CD4-positive, alpha-beta memory T cell (primary cell): ENCODE measurements at regions of chr11 and their contacts with region 1.

Region 1: DNA sequence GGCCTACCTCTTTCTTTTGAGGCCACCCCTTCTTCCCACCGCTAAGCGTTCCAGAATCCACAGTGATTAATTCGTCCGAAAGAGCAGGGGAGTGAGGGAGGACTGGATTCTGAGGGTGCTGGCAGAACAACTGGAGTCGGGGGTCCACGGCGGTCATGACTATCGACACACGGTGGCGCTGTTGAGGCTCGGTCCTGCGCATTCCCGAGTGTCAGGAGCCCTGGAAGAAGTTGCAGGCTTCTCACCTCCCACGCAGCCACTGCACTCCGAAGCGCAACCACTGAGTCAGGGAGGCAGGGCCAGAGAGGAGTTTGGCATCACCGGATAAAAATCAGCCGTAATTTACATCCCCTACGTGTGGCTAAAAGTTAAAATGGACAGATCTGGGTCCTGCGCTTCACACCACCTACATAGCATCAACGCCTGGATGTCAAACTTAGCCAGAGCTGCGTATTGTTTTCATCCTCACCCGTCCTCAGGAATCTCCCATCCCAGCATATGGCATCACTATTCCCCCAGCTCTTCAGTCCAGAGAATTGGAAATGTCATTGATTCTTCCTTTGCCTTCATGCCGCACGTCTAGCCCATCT is 10.7 kb upstream of the CTSF start:
- DNase-seq: peak; percentile 64 to 72 (median 68)
- H3K4me3 ChIP-seq: no peak overlapping the region
- H3K4me3 Mint-ChIP-seq: peak overlapping the region in 2 of 8 donors; percentile 33 to 47
- H3K27ac ChIP-seq: no peak overlapping the region
- H3K27ac Mint-ChIP-seq: peak overlapping the region in 3 of 7 donors; percentile 9 to 68 (median 25)
- H3K4me1 ChIP-seq: peaks cover 5% of the 10 kb centered on the region
- H3K4me1 Mint-ChIP-seq: peaks cover 0 to 12% (median 6%) of the 10 kb centered on the region in 4 donors
- H3K27me3 ChIP-seq: no peaks in the 10 kb centered on the region
- H3K27me3 Mint-ChIP-seq: peaks cover 0 to 7% of the 10 kb centered on the region in 2 donors

Region 2: GRCh38 chr11:66592457-66593302 is 13.6 kb after region 1 on chr11 and contains the starts of genes CCDC87 and CCS:
- CTCF ChIA-PET with region 1: interaction called, 54 read pairs
- POLR2A ChIA-PET with region 1: interaction called, 3 read pairs
- intact Hi-C with region 1: no loop called
- DNase-seq: peak; percentile 95 to 98 (median 97)
- H3K4me3 ChIP-seq: peak within 1 kb of the TSS; percentile 71 to 98
- H3K4me3 Mint-ChIP-seq: peak within 1 kb of the TSS; percentile 98 to 100 (median 99)
- H3K27ac ChIP-seq: peak within 1 kb of the TSS; percentile 88
- H3K27ac Mint-ChIP-seq: peak within 1 kb of the TSS; percentile 96 to 100 (median 100)
- H3K4me1 ChIP-seq: peaks cover 35% of the 10 kb centered on the region
- H3K4me1 Mint-ChIP-seq: peaks cover 16 to 42% (median 27%) of the 10 kb centered on the region in 4 donors
- H3K27me3 ChIP-seq: no peaks in the 10 kb centered on the region
- H3K27me3 Mint-ChIP-seq: no peaks in the 10 kb centered on the region
- total RNA-seq, gene CCDC87: not detected
- total RNA-seq, gene CCS: 61.0 to 61.5 TPM

Region 3: DNA sequence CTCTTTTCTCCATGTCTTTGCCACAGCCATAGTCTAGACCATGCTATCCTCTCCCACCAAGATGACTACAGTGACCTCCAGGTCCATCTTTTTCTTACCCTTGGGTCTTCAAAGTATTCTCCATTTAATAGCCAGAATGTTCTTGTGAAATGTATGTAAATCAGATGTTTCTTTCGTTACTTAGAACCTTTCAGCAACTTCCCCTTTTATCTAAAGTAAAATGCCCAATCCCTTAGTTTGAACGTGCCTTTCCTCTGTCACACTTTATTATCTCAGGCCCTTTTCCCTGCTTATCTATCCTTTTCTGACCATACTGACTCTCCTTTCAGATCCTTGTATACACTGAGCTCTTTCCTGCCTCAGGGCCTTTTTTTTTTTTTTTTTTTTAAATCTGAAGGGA is 80.7 kb after region 1 on chr11:
- CTCF ChIA-PET with region 1: interaction called, 10 read pairs
- POLR2A ChIA-PET with region 1: no interaction called
- intact Hi-C with region 1: no loop called
- DNase-seq: no peak
- H3K4me3 ChIP-seq: no peak overlapping the region
- H3K4me3 Mint-ChIP-seq: no peak overlapping the region
- H3K27ac ChIP-seq: no peak overlapping the region
- H3K27ac Mint-ChIP-seq: peak overlapping the region in 5 of 7 donors; percentile 3 to 74 (median 63)
- H3K4me1 ChIP-seq: no peaks in the 10 kb centered on the region
- H3K4me1 Mint-ChIP-seq: peaks cover 10 to 22% (median 12%) of the 10 kb centered on the region in 4 donors
- H3K27me3 ChIP-seq: no peaks in the 10 kb centered on the region
- H3K27me3 Mint-ChIP-seq: no peaks in the 10 kb centered on the region

Region 4: DNA sequence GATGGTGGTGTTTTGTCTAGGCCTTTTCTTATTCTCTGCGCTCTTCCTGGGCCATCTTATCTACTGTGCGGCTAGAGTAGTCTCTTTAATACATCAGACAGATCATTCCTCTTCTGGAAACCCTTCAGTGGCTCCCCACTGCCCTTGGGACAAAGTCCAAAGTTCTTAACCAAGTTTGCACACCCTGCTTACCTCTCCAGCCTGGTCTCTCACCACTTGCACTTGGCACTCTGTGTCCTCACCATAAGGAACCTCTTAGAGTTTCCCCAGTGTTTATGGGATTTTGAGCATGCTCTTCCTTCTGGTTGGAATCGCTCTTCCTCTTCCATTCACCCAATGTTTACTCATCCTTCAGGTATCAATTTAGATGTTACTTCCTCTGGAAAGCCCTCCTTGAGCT is 155.1 kb after region 1 on chr11:
- CTCF ChIA-PET with region 1: no interaction called
- POLR2A ChIA-PET with region 1: no interaction called
- intact Hi-C with region 1: no loop called
- DNase-seq: no peak
- H3K4me3 ChIP-seq: no peak overlapping the region
- H3K4me3 Mint-ChIP-seq: no peak overlapping the region
- H3K27ac ChIP-seq: no peak overlapping the region
- H3K27ac Mint-ChIP-seq: no peak overlapping the region
- H3K4me1 ChIP-seq: no peaks in the 10 kb centered on the region
- H3K4me1 Mint-ChIP-seq: peaks cover 0 to under 1% (median 0%) of the 10 kb centered on the region in 4 donors
- H3K27me3 ChIP-seq: peaks cover 3% of the 10 kb centered on the region
- H3K27me3 Mint-ChIP-seq: peaks cover 19 to 24% of the 10 kb centered on the region in 2 donors

Region 5: DNA sequence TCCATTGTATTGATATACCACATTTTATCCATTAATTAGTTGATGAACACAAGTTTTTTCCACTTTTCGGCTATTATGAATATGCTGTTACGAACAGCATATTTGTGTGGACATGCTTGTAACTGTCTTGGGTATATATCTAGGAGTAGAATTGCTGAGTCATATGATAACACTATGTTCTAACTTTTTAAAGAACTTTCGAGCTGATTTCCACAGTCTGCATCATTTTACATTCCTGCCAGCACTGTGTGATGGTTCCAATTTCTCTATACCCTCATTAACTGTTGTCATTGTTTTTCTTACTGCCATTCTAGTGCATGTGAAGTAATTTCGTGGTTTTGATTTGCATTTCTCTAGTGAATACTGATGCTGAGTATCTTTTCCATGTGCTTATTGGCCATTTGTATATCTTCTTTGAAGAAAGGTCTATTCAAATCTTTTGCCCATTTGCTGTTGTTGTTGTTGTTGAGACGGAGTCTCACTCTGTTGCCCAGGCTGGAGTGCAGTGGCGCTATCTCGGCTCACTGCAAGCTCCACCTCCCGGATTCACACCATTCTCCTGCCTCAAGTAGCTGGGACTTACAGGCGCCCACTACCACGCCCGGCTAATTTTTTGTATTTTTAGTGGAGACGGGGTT is 256.8 kb after region 1 on chr11:
- CTCF ChIA-PET with region 1: no interaction called
- POLR2A ChIA-PET with region 1: no interaction called
- intact Hi-C with region 1: loop called (anchors 1 kb)
- DNase-seq: no peak
- H3K4me3 ChIP-seq: no peak overlapping the region
- H3K4me3 Mint-ChIP-seq: no peak overlapping the region
- H3K27ac ChIP-seq: no peak overlapping the region
- H3K27ac Mint-ChIP-seq: peak overlapping the region in 4 of 7 donors; percentile 21 to 73 (median 38)
- H3K4me1 ChIP-seq: peaks cover 21% of the 10 kb centered on the region
- H3K4me1 Mint-ChIP-seq: peaks cover 18 to 32% (median 27%) of the 10 kb centered on the region in 4 donors
- H3K27me3 ChIP-seq: no peaks in the 10 kb centered on the region
- H3K27me3 Mint-ChIP-seq: no peaks in the 10 kb centered on the region